Activated T-helper 1 cell treated with anti-CD3 and anti-CD28 coated beads, Interleukin-12 subunit alpha, Interleukin-12 subunit beta, Interleukin-2, Interleukin-4 antibody, amounts not matched to agents 30 ng/mL and 10 ng/mL and 1 ng/mL, durations not matched to agents 14 hours and 24 hours and 36 hours (primary cell): ENCODE measurements at regions of chr9 and their contacts with region 1.

Region 1: GRCh38 chr9:127770905-127771569 is 7.4 kb downstream of the SH2D3C start:
- DNase-seq: peak; percentile 99
- H3K4me3 Mint-ChIP-seq: peak overlapping the region; percentile 86
- H3K27ac Mint-ChIP-seq: peak overlapping the region; percentile 90
- H3K4me1 Mint-ChIP-seq: peaks cover 63% of the 10 kb centered on the region
- H3K27me3 Mint-ChIP-seq: no peaks in the 10 kb centered on the region

Region 2: GRCh38 chr9:127224178-127224882 is 546.7 kb before region 1 on chr9:
- intact Hi-C with region 1: loop called (anchors 10 kb)
- DNase-seq: peak; percentile 82
- H3K4me3 Mint-ChIP-seq: peak overlapping the region; percentile 85
- H3K27ac Mint-ChIP-seq: peak overlapping the region; percentile 97
- H3K4me1 Mint-ChIP-seq: peaks cover 18% of the 10 kb centered on the region
- H3K27me3 Mint-ChIP-seq: peaks cover 42% of the 10 kb centered on the region

Region 3: GRCh38 chr9:127578955-127579853 is 191.8 kb before region 1 on chr9:
- intact Hi-C with region 1: loop called (anchors 5 kb)
- DNase-seq: peak; percentile 66
- H3K4me3 Mint-ChIP-seq: peak overlapping the region; percentile 78
- H3K27ac Mint-ChIP-seq: peak overlapping the region; percentile 76
- H3K4me1 Mint-ChIP-seq: peaks cover 44% of the 10 kb centered on the region
- H3K27me3 Mint-ChIP-seq: no peaks in the 10 kb centered on the region

Region 4: DNA sequence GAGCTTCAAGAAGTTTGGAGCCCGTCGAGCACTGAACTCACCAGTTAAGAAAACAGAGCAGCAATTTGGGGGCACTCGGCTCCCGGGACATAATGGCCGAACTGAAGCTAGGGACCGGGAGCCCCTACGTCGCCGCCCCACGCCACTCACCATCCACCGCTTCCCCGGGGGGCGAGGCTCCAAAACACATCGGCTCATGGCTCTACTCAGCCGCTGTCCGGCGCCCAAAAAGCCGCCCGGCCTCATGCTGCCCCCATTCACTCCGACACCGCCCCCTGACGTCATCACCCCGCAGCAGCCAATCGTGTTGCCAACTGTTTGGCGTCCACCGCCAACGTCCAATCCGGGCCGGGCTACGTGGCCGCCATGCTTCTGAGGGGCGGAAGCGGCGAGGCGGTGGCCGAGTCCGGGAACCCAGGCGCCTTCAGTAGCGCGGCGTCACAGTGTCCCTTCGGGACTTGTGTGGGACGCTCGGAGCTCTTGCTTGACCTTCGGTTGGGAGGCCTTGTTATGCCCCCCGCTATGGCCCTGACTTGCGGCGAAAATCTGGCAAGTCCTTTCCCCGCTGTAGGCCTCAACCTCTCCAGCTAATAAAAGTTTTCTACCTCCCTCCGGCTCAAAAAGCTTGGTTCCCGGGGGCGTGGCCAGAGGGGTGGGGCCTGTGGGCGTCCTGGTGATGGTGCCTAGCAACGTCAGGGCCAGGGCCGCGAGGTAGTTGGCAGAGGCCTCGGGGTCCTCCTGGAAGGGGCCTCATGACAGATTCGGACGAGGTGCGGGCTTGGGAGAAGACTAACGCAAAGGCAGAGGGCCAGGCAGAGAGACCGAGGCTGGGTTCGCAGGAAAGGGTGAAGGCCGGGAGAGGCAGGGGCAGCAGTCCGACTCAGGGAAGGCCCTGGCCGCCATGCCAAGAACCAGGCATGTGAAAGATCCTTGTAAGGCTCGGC is 55.4 kb before region 1 on chr9 and contains the starts of genes PTRH1 and TTC16:
- intact Hi-C with region 1: loop called (anchors 1 kb)
- DNase-seq: peak; percentile 97
- H3K4me3 Mint-ChIP-seq: peak within 1 kb of the TSS; percentile 98
- H3K27ac Mint-ChIP-seq: peak within 1 kb of the TSS; percentile 98
- H3K4me1 Mint-ChIP-seq: peaks cover 28% of the 10 kb centered on the region
- H3K27me3 Mint-ChIP-seq: peaks cover 2% of the 10 kb centered on the region
- total RNA-seq, gene PTRH1: 22.9 and 23.5 TPM in 2 replicates
- total RNA-seq, gene TTC16: 0.10 TPM in 1 of 2 replicates, not detected in the other

Region 5: GRCh38 chr9:127785023-127785932 is 14.2 kb after region 1 on chr9:
- intact Hi-C with region 1: loop called (anchors 1 kb)
- DNase-seq: peak; percentile 87
- H3K4me3 Mint-ChIP-seq: peak overlapping the region; percentile 96
- H3K27ac Mint-ChIP-seq: peak overlapping the region; percentile 99
- H3K4me1 Mint-ChIP-seq: peaks cover 67% of the 10 kb centered on the region
- H3K27me3 Mint-ChIP-seq: no peaks in the 10 kb centered on the region

Region 6: GRCh38 chr9:128127990-128128835 is 357.2 kb after region 1 on chr9:
- intact Hi-C with region 1: loop called (anchors 1 kb)
- DNase-seq: peak; percentile 79
- H3K4me3 Mint-ChIP-seq: peak overlapping the region; percentile 90
- H3K27ac Mint-ChIP-seq: peak overlapping the region; percentile 99
- H3K4me1 Mint-ChIP-seq: peaks cover 39% of the 10 kb centered on the region
- H3K27me3 Mint-ChIP-seq: peaks cover 19% of the 10 kb centered on the region